ENCODE measurements at regions of chr6 and their contacts with region 1.

Region 1: GRCh38 chr6:142045380-142046278 is 87.1 kb upstream of the GJE1 start:
- DNase-seq: peak; percentile 51
- ATAC-seq: peak; percentile 46; the same call in 1 of the 2 replicates
- H3K4me3 ChIP-seq: no peak overlapping the region
- H3K27ac ChIP-seq: no peak overlapping the region
- H3K4me1 ChIP-seq: no peaks in the 10 kb centered on the region
- H3K27me3 ChIP-seq: no peaks in the 10 kb centered on the region
- CTCF ChIP-seq: peak; percentile 52
- POLR2A ChIP-seq: no peak
- RAD21 ChIP-seq: peak; percentile 56

Region 2: GRCh38 chr6:141988954-141989705 is 56.5 kb before region 1 on chr6:
- CTCF ChIA-PET with region 1: no interaction called
- POLR2A ChIA-PET with region 1: no interaction called
- dilution Hi-C with region 1: no loop called
- in situ Hi-C with region 1: loop called (anchors 5 kb)
- intact Hi-C with region 1: loop called (anchors 1 kb)
- DNase-seq: peak; percentile 81
- ATAC-seq: peak; percentile 91
- H3K4me3 ChIP-seq: no peak overlapping the region
- H3K27ac ChIP-seq: no peak overlapping the region
- H3K4me1 ChIP-seq: peaks cover 2% of the 10 kb centered on the region; the same call in 1 of the 2 replicates
- H3K27me3 ChIP-seq: no peaks in the 10 kb centered on the region
- CTCF ChIP-seq: peak; percentile 84
- POLR2A ChIP-seq: peak; percentile 44; the same call in 1 of the 2 replicates
- RAD21 ChIP-seq: peak; percentile 91